Esophagus muscularis mucosa (tissue), 4 donors: ENCODE measurements at regions of chr1 and their contacts with region 1.

Region 1: GRCh38 chr1:55718758-55719671 is 503.9 kb upstream of the USP24 start:
- DNase-seq: peak; percentile 96
- H3K4me3 ChIP-seq: no peak overlapping the region
- H3K27ac ChIP-seq: peak overlapping the region; percentile 71 to 90 (median 80)
- H3K4me1 ChIP-seq: peaks cover 6 to 65% (median 54%) of the 10 kb centered on the region in 4 donors
- H3K27me3 ChIP-seq: no peaks in the 10 kb centered on the region
- CTCF ChIP-seq: no peak
- EP300 ChIP-seq: peak; percentile 97
- POLR2A ChIP-seq: no peak

Region 2: GRCh38 chr1:55117941-55118340 is 601.1 kb before region 1 on chr1:
- intact Hi-C with region 1: no loop called
- DNase-seq: no peak
- H3K4me3 ChIP-seq: no peak overlapping the region
- H3K27ac ChIP-seq: no peak overlapping the region
- H3K4me1 ChIP-seq: no peaks in the 10 kb centered on the region
- H3K27me3 ChIP-seq: no peaks in the 10 kb centered on the region
- CTCF ChIP-seq: no peak
- EP300 ChIP-seq: no peak
- POLR2A ChIP-seq: no peak

Region 3: GRCh38 chr1:55375617-55376258 is 343.3 kb before region 1 on chr1:
- intact Hi-C with region 1: loop called (anchors 5 kb)
- DNase-seq: peak; percentile 84
- H3K4me3 ChIP-seq: no peak overlapping the region
- H3K27ac ChIP-seq: peak overlapping the region; percentile 3 to 57 (median 44)
- H3K4me1 ChIP-seq: peaks cover 0 to 15% (median 9%) of the 10 kb centered on the region in 4 donors
- H3K27me3 ChIP-seq: no peaks in the 10 kb centered on the region
- CTCF ChIP-seq: peak; percentile 80 to 96 (median 94)
- EP300 ChIP-seq: no peak
- POLR2A ChIP-seq: no peak

Region 4: GRCh38 chr1:55443175-55443915 is 275.7 kb before region 1 on chr1:
- intact Hi-C with region 1: no loop called
- DNase-seq: peak; percentile 97
- H3K4me3 ChIP-seq: no peak overlapping the region
- H3K27ac ChIP-seq: peak overlapping the region; percentile 30 to 67 (median 46)
- H3K4me1 ChIP-seq: peaks cover 0 to 20% (median 17%) of the 10 kb centered on the region in 4 donors
- H3K27me3 ChIP-seq: no peaks in the 10 kb centered on the region
- CTCF ChIP-seq: no peak
- EP300 ChIP-seq: peak; percentile 44
- POLR2A ChIP-seq: no peak

Region 5: GRCh38 chr1:55572878-55573734 is 145.9 kb before region 1 on chr1:
- intact Hi-C with region 1: loop called (anchors 10 kb)
- DNase-seq: peak; percentile 87
- H3K4me3 ChIP-seq: no peak overlapping the region
- H3K27ac ChIP-seq: no peak overlapping the region
- H3K4me1 ChIP-seq: peaks cover 3 to 19% (median 15%) of the 10 kb centered on the region in 4 donors
- H3K27me3 ChIP-seq: no peaks in the 10 kb centered on the region
- CTCF ChIP-seq: no peak
- EP300 ChIP-seq: no peak
- POLR2A ChIP-seq: no peak

Region 6: DNA sequence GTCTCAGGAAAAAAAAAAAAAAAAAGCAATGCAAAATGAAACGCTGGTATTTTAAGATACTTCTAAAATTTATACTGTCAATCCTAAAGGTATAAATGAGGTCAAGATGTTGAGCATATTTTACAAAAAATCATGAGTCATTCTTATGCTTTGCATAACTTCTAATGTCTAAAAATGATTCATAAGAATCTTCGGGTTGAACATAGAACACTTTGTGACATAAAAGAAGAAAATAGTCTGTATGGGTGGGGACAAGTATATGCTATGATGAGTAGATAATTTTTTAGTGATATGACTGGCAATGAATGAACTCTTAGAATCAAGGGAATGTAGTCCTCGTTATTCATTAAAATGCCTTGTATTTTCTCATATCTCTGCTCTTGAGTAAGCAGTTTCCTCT is 87.0 kb before region 1 on chr1:
- intact Hi-C with region 1: loop called (anchors 5 kb)
- DNase-seq: no peak
- H3K4me3 ChIP-seq: no peak overlapping the region
- H3K27ac ChIP-seq: peak overlapping the region; percentile 51 to 70 (median 62)
- H3K4me1 ChIP-seq: peaks cover 0 to 58% (median 39%) of the 10 kb centered on the region in 4 donors
- H3K27me3 ChIP-seq: no peaks in the 10 kb centered on the region
- CTCF ChIP-seq: no peak
- EP300 ChIP-seq: no peak
- POLR2A ChIP-seq: no peak

Region 7: DNA sequence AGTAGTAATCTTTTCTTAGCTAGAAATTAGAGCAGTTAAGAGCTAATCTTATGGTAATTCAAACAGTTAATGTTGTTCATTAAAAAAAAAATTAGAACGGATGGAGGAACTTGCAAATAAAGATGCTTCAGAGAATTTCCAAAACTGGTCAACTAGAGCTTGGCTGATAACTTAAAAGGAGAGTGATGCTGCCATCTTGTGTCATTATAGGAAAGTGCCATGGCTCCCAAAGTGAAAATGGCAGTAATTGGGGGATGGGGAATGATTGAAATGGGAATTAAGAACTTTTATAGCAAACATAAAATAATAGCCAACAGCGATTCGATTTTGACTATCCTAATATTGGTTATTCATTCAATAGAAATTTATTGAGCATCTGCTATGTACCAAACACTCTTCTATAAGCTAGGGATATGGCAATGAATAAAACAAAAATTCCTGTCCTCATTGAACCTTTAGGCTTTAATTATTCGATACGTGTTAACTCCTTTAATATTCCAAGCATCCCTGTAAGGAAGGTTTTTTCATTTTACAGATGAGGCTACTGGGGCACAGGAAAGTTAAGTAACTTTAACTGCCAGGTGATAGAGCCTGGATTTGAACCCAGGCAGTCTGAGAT is 866.0 kb after region 1 on chr1:
- intact Hi-C with region 1: loop called (anchors 10 kb)
- DNase-seq: no peak
- H3K4me3 ChIP-seq: no peak overlapping the region
- H3K27ac ChIP-seq: no peak overlapping the region
- H3K4me1 ChIP-seq: peaks cover 2 to 13% (median 5%) of the 10 kb centered on the region in 4 donors
- H3K27me3 ChIP-seq: no peaks in the 10 kb centered on the region
- CTCF ChIP-seq: peak; percentile 89 to 93 (median 90)
- EP300 ChIP-seq: no peak
- POLR2A ChIP-seq: no peak